ENCODE measurements at regions of chr3 and their contacts with region 1.

Region 1: GRCh38 chr3:4493014-4493940 is at the start of gene ITPR1:
- H3K4me3 ChIP-seq: peak within 1 kb of the TSS; percentile 71
- H3K27ac ChIP-seq: peak within 1 kb of the TSS; percentile 83
- H3K4me1 ChIP-seq: peaks cover 13% of the 10 kb centered on the region
- CTCF ChIP-seq: peak; percentile 47; the same call in 1 of the 2 replicates

Region 2: DNA sequence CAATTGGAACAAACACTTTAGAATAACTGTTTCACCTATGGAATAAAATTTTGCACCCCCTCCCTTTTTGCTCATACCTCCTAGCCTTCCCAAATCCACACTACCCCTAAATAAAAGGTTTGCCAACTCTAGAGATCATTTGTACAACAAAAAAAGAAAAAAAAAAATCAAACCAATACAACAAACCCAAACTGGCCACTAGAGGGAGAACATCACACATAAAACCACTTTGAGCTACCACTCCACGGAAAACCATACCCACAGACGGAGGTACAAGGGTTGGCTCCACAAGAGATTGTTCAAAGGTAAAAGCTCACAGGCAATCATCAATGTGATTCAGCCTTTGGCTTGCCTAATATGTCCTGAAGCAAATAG is 142.5 kb before region 1 on chr3:
- CTCF ChIA-PET with region 1: interaction called, 18 read pairs
- POLR2A ChIA-PET with region 1: no interaction called
- H3K4me3 ChIP-seq: no peak overlapping the region
- H3K27ac ChIP-seq: no peak overlapping the region
- H3K4me1 ChIP-seq: peaks cover 3% of the 10 kb centered on the region; the same call in 1 of the 2 replicates
- CTCF ChIP-seq: peak; percentile 76

Region 3: GRCh38 chr3:4466741-4467521 is 26.3 kb before region 1 on chr3 and contains the start of gene SUMF1:
- CTCF ChIA-PET with region 1: interaction called, 3 read pairs
- POLR2A ChIA-PET with region 1: interaction called, 56 read pairs
- H3K4me3 ChIP-seq: peak within 1 kb of the TSS; percentile 73
- H3K27ac ChIP-seq: no peak within 1 kb of the TSS
- H3K4me1 ChIP-seq: no peaks in the 10 kb centered on the region
- CTCF ChIP-seq: no peak

Region 4: DNA sequence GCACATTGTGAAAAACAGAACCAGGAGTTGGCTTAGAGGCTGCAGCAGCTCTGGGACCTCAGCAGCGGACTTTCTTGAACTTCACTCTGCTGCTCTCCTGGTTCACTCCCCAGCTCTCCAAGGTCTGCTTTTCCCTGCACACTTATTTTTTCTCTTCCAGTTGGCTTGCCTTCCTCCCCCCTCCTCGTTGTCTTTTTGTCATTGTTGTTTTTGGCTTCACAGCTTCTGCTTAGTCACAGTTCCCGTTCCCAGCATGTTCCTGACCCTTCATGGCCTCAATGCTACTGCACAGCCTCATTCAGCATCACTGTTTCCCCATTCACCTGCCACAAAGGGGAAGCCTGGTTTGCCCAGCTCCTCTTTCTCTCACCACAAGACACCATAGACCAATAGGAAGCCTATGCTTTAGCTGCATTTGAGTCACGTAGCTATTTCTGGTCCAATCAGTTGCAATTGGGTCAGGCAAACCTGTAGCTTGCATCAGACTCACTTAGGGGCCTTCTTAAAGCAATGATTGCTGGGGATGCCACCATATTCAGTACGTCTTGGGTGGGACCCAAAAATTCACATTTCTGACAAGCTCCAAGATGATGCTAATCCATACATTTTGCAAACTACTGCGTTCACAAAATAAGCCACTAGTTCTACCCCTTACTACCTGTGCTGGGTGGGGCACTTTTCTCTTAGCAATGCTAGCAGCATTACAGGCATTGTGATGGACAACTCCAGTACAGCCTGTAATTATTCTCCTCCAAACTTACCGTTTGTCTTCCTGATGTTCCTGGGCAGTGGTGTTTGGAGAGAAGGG is 18.4 kb before region 1 on chr3:
- CTCF ChIA-PET with region 1: interaction called, 3 read pairs
- POLR2A ChIA-PET with region 1: interaction called, 56 read pairs
- H3K4me3 ChIP-seq: no peak overlapping the region
- H3K27ac ChIP-seq: no peak overlapping the region
- H3K4me1 ChIP-seq: 0 out of 2 replicates have a peak, but pooled peaks cover 2% of the 10 kb centered on the region
- CTCF ChIP-seq: no peak

Measured in HEK293 (cell line).